ENCODE measurements at regions of chr19 and their contacts with region 1.

Region 1: DNA sequence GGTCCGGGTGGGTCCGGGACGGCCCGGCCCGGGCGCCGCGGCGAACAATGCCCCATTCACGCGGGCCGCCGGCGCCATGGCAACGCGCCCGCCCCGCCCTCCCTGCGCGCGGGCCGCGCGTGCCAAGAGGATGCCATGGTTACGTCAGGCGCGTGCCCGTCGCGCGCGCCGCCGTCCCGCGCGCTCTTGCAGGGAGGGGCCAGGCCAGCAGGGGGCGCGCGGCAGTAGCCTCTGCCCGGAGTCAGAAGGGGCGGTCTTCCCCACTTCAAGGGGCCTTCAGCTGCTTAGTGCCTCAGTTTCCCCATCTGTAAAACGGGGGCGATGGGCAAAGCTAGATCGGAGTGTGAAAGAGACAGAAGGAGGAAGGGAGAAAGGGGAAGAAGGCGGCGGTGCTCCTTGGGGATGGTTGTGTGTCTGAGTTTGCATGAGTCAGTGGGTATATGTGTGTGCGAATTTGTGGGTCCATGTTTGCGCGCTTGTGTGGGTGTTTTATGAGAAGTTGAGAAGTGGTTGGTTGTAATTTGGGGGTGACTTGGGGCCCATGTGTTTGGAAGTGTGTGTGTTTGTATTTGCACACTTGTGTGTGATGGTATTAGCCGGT is 11.6 kb upstream of the NFIX start:
- DNase-seq: peak; percentile 72 to 93 (median 84)
- ATAC-seq: peak; percentile 94
- H3K4me3 ChIP-seq: no peak overlapping the region
- H3K4me3 Mint-ChIP-seq: no peak overlapping the region
- H3K27ac ChIP-seq: peak overlapping the region; percentile 32
- H3K27ac Mint-ChIP-seq: no peak overlapping the region
- H3K4me1 ChIP-seq: peaks cover 6 to 16% of the 10 kb centered on the region in 2 donors
- H3K4me1 Mint-ChIP-seq: peaks cover 0 to 9% (median 0%) of the 10 kb centered on the region in 7 donors
- H3K27me3 ChIP-seq: no peaks in the 10 kb centered on the region
- H3K27me3 Mint-ChIP-seq: peaks cover 0 to 11% (median 0%) of the 10 kb centered on the region in 5 donors

Region 2: DNA sequence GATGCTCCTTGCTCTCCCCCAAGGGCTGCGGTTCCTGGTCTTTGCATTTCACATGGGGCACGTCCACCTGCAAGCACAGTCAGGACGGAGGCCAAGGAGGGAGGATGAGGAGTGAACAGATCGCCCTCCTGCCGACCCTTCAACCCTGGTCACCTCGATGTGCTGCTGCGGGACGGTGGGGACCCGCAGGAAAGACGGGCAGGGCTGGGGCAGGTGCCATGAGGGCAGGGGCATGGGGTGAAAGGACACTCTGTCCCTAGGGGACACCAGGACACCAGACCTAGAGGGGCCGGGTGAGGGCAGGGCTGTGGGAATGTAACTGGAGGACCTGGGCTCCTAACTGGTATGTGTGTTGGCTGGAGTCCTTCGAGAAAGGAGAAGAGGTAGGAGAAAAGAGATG is 65.4 kb before region 1 on chr19:
- CTCF ChIA-PET with region 1: no interaction called
- POLR2A ChIA-PET with region 1: no interaction called
- intact Hi-C with region 1: no loop called
- DNase-seq: no peak
- ATAC-seq: no peak
- H3K4me3 ChIP-seq: no peak overlapping the region
- H3K4me3 Mint-ChIP-seq: peak overlapping the region in 9 of 10 donors; percentile 23 to 87 (median 76)
- H3K27ac ChIP-seq: no peak overlapping the region
- H3K27ac Mint-ChIP-seq: peak overlapping the region in 6 of 9 donors; percentile 48 to 96 (median 91)
- H3K4me1 ChIP-seq: peaks cover 12 to 27% of the 10 kb centered on the region in 2 donors
- H3K4me1 Mint-ChIP-seq: peaks cover 9 to 51% (median 34%) of the 10 kb centered on the region in 7 donors
- H3K27me3 ChIP-seq: no peaks in the 10 kb centered on the region
- H3K27me3 Mint-ChIP-seq: no peaks in the 10 kb centered on the region

Region 3: GRCh38 chr19:13033819-13034611 is 50.4 kb after region 1 on chr19:
- CTCF ChIA-PET with region 1: interaction called, 3 read pairs
- POLR2A ChIA-PET with region 1: no interaction called
- intact Hi-C with region 1: loop called (anchors 1 to 2 kb)
- DNase-seq: peak in 3 of 9 donors; percentile 13 to 40 (median 31)
- ATAC-seq: peak; percentile 81
- H3K4me3 ChIP-seq: no peak overlapping the region
- H3K4me3 Mint-ChIP-seq: no peak overlapping the region
- H3K27ac ChIP-seq: no peak overlapping the region
- H3K27ac Mint-ChIP-seq: no peak overlapping the region
- H3K4me1 ChIP-seq: no peaks in the 10 kb centered on the region
- H3K4me1 Mint-ChIP-seq: peaks cover 0 to 7% (median 0%) of the 10 kb centered on the region in 7 donors
- H3K27me3 ChIP-seq: no peaks in the 10 kb centered on the region
- H3K27me3 Mint-ChIP-seq: no peaks in the 10 kb centered on the region